Heart right ventricle (tissue), 16 donors: ENCODE measurements at regions of chr5 and their contacts with region 1.

Region 1: DNA sequence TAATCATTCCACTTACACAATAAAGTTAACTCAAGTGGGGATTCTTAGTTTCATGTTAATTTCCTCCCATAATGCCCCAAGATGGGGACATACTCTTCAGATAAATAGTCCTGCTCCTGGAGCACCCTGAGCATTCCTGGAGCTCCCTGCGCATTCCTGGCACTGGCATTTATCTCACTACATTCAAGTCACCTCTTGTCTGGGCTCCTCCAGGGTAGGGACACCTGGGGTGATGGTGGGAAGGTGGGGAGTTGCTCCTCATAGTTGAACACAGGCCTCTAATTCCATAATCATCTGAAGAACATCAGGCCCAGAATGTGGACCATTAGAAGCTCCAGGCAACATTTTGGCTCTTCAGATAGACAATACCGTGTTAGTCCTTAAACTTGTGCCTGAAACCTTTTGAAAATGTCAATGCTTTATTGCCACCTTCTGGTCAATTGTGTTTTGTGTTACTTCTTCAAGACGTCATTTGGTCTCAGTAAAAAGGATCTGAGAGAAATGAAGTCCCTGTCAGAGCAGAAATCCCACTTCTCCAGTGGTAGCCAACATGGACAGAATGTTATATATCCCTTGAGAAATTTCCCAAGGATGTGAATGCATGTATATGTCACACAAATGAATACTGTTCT is 14.2 kb upstream of the AGGF1 start:
- DNase-seq: peak in 1 of 2 donors; percentile 7
- ATAC-seq: peak in 5 of 8 donors; percentile 20 to 48 (median 23)
- H3K4me3 ChIP-seq: no peak overlapping the region
- H3K27ac ChIP-seq: no peak overlapping the region
- H3K4me1 ChIP-seq: no peaks in the 10 kb centered on the region
- H3K27me3 ChIP-seq: peaks cover 0 to 6% (median 0%) of the 10 kb centered on the region in 7 donors
- CTCF ChIP-seq: peak in 7 of 9 donors; percentile 43 to 64 (median 50)

Region 2: GRCh38 chr5:76874088-76874581 is 141.9 kb before region 1 on chr5:
- intact Hi-C with region 1: loop called in 8 of 10 experiments (anchors 2 to 10 kb)
- DNase-seq: no peak
- ATAC-seq: no peak
- H3K4me3 ChIP-seq: no peak overlapping the region
- H3K27ac ChIP-seq: no peak overlapping the region
- H3K4me1 ChIP-seq: peaks cover 0 to 12% (median 6%) of the 10 kb centered on the region in 9 donors
- H3K27me3 ChIP-seq: no peaks in the 10 kb centered on the region
- CTCF ChIP-seq: no peak